Activated CD4-positive, alpha-beta T cell treated with anti-CD3 and anti-CD28 coated beads for 36 hours (primary cell): ENCODE measurements at regions of chr13 and their contacts with region 1.

Region 1: GRCh38 chr13:36858290-36858689 is 39.3 kb downstream of the RFXAP start:
- DNase-seq: no peak
- ATAC-seq: peak; percentile 64
- H3K4me3 Mint-ChIP-seq: no peak overlapping the region
- H3K27ac Mint-ChIP-seq: no peak overlapping the region
- H3K4me1 Mint-ChIP-seq: peaks cover 3% of the 10 kb centered on the region
- H3K27me3 Mint-ChIP-seq: peaks cover 23% of the 10 kb centered on the region

Region 2: DNA sequence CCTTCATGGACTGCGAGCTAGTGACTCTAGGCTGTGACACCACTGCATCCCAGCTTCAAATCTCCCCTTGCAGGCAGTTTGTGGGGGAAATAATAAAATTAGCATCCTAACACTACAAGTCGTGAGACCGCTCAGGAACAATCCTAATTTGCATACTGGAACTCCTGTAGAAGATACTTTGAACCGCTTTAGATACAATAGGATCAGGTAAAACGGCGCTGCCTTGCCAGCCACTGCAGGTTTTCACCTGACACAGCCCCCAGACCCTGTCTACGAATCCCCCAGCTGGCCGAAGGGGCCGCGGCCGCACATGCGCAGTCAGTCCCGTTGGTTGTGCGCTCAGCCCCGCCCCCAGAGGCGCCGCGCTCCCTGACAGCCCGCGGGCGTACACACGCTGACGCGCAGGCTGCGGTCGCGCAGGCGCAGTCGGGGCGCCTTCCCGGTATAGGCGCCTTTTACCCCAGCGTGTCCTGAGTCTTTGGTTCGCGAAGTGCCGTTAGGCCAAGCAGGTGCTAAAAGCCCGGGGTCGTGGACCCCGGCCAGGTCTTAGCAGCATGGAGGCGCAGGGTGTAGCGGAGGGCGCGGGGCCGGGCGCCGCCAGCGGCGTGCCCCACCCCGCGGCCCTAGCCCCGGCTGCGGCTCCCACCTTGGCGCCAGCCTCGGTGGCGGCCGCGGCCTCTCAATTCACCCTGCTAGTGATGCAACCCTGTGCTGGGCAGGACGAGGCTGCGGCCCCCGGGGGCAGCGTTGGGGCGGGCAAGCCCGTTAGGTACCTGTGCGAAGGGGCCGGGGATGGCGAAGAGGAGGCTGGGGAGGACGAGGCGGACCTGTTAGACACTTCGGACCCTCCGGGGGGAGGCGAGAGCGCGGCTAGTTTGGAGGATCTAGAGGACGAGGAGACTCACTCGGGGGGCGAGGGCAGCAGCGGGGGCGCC is 39.2 kb before region 1 on chr13 and contains the start of gene RFXAP:
- CTCF ChIA-PET with region 1: no interaction called
- POLR2A ChIA-PET with region 1: no interaction called
- intact Hi-C with region 1: no loop called
- DNase-seq: peak; percentile 95
- ATAC-seq: peak; percentile 92
- H3K4me3 Mint-ChIP-seq: peak within 1 kb of the TSS; percentile 85
- H3K27ac Mint-ChIP-seq: peak within 1 kb of the TSS; percentile 90
- H3K4me1 Mint-ChIP-seq: peaks cover 45% of the 10 kb centered on the region
- H3K27me3 Mint-ChIP-seq: peaks cover 8% of the 10 kb centered on the region
- total RNA-seq, gene RFXAP: 10.1 to 13.8 TPM

Region 3: GRCh38 chr13:37068962-37069361 is 210.7 kb after region 1 on chr13:
- CTCF ChIA-PET with region 1: no interaction called
- POLR2A ChIA-PET with region 1: no interaction called
- intact Hi-C with region 1: loop called in 1 of 2 experiments (anchors 2 kb)
- DNase-seq: no peak
- ATAC-seq: no peak
- H3K4me3 Mint-ChIP-seq: no peak overlapping the region
- H3K27ac Mint-ChIP-seq: no peak overlapping the region
- H3K4me1 Mint-ChIP-seq: no peaks in the 10 kb centered on the region
- H3K27me3 Mint-ChIP-seq: no peaks in the 10 kb centered on the region